K562 (cell line): ENCODE measurements at regions of chr20 and their contacts with region 1.

Region 1: GRCh38 chr20:63881451-63882226 is 13.3 kb upstream of the DNAJC5 start:
- DNase-seq: no peak
- ATAC-seq: no peak; the same call in 2 of the 3 replicates
- H3K4me3 ChIP-seq: no peak overlapping the region
- H3K27ac ChIP-seq: no peak overlapping the region
- H3K4me1 ChIP-seq: peaks cover 0 to 16% of the 10 kb centered on the region in 2 experiments; a peak in 1 of 5 replicates
- H3K27me3 ChIP-seq: no peaks in the 10 kb centered on the region
- CTCF ChIP-seq: no peak
- EP300 ChIP-seq: no peak
- POLR2A ChIP-seq: no peak
- RAD21 ChIP-seq: no peak

Region 2: GRCh38 chr20:63894358-63895201 is 12.9 kb after region 1 on chr20 and contains the start of gene DNAJC5:
- CTCF ChIA-PET with region 1: no interaction called
- POLR2A ChIA-PET with region 1: interaction called, 12 read pairs
- in situ Hi-C with region 1: no loop called
- intact Hi-C with region 1: no loop called
- DNase-seq: peak; percentile 97 to 100 (median 100)
- ATAC-seq: peak; percentile 92
- H3K4me3 ChIP-seq: peak within 1 kb of the TSS; percentile 61
- H3K27ac ChIP-seq: peak within 1 kb of the TSS; percentile 78
- H3K4me1 ChIP-seq: peaks cover 30 to 45% of the 10 kb centered on the region in 2 experiments
- H3K27me3 ChIP-seq: no peaks in the 10 kb centered on the region
- CTCF ChIP-seq: no peak
- EP300 ChIP-seq: no peak
- POLR2A ChIP-seq: no peak; the same call in 1 of the 2 replicates
- RAD21 ChIP-seq: no peak
- polyA plus RNA-seq, gene DNAJC5: 0.95 to 0.99 TPM